Right cardiac atrium (tissue), 5 donors: ENCODE measurements at regions of chr3 and their contacts with region 1.

Region 1: GRCh38 chr3:43155464-43156121 is 49.7 kb upstream of the POMGNT2 start:
- DNase-seq: peak; percentile 73 to 86 (median 83)
- ATAC-seq: peak; percentile 82 to 84
- H3K4me3 ChIP-seq: no peak overlapping the region
- H3K27ac ChIP-seq: no peak overlapping the region
- H3K4me1 ChIP-seq: peaks cover 6% of the 10 kb centered on the region
- H3K27me3 ChIP-seq: no peaks in the 10 kb centered on the region

Region 2: DNA sequence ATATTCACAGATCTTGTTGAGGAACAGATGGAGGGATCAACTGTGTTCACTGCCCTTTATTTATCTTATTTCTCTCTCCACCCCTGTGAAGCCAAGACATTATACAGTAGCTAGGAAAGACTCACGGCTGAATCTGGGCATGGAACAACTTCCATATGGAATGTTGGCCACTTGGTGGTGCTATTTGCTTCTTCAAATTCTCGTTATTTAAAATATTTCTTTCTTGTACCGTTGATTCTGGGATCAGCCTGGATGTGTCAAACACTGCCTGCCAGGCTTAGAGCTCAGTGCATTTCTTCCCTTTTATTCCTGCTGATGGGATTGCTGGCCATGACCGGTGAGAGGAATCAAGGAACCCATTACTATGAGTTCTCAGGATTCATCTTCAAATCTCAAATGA is 194.0 kb before region 1 on chr3:
- intact Hi-C with region 1: loop called (anchors 5 kb)
- DNase-seq: peak in 1 of 3 donors; percentile 57
- ATAC-seq: peak; percentile 67 to 70
- H3K4me3 ChIP-seq: no peak overlapping the region
- H3K27ac ChIP-seq: no peak overlapping the region
- H3K4me1 ChIP-seq: no peaks in the 10 kb centered on the region
- H3K27me3 ChIP-seq: no peaks in the 10 kb centered on the region

Region 3: GRCh38 chr3:43104660-43105595 is 50.7 kb before region 1 on chr3:
- intact Hi-C with region 1: no loop called
- DNase-seq: peak in 1 of 3 donors; percentile 66
- ATAC-seq: peak; percentile 11
- H3K4me3 ChIP-seq: peak overlapping the region; percentile 67
- H3K27ac ChIP-seq: peak overlapping the region; percentile 11
- H3K4me1 ChIP-seq: peaks cover 9% of the 10 kb centered on the region
- H3K27me3 ChIP-seq: no peaks in the 10 kb centered on the region